ENCODE measurements at regions of chr4 and their contacts with region 1.

Region 1: DNA sequence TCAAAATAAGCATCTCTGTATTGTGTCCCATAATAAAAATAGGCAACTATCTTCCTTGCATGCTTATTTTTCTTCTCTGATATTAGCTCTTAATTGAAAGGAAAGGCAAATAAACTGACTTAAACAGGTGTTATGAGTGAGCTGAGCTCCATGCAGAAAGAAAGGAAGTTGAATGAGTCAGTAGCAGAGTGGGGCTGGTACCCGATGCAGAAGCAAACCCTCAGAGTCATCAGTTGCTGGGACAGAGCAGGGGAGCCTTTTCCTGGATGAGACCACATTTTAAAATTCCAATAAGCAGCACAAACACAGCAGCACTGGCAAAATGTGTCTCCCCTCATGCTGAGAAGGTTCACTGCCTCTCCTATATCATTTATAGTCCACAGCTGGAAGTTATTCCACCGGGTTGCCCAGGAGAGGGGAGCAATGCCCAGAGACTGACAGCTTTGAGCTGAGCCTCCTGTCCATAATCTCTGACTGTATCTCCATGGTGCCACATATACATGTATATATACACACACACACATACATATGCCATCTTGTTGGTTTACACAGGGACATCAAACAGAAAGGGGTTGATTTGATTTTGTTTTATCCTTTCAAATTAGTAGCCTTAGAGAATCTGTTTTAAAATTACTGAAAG is 274.3 kb upstream of the PPARGC1A start:
- DNase-seq: no peak
- H3K4me3 Mint-ChIP-seq: no peak overlapping the region
- H3K27ac Mint-ChIP-seq: no peak overlapping the region
- H3K4me1 Mint-ChIP-seq: no peaks in the 10 kb centered on the region
- H3K27me3 Mint-ChIP-seq: peaks cover 11% of the 10 kb centered on the region

Region 2: GRCh38 chr4:24226023-24226422 is 61.8 kb after region 1 on chr4:
- CTCF ChIA-PET with region 1: no interaction called
- intact Hi-C with region 1: loop called (anchors 10 kb)
- DNase-seq: no peak
- H3K4me3 Mint-ChIP-seq: no peak overlapping the region
- H3K27ac Mint-ChIP-seq: no peak overlapping the region
- H3K4me1 Mint-ChIP-seq: no peaks in the 10 kb centered on the region
- H3K27me3 Mint-ChIP-seq: peaks cover 2% of the 10 kb centered on the region

Region 3: GRCh38 chr4:24382381-24382780 is 218.2 kb after region 1 on chr4:
- CTCF ChIA-PET with region 1: no interaction called
- intact Hi-C with region 1: no loop called
- DNase-seq: no peak
- H3K4me3 Mint-ChIP-seq: no peak overlapping the region
- H3K27ac Mint-ChIP-seq: no peak overlapping the region
- H3K4me1 Mint-ChIP-seq: peaks cover 7% of the 10 kb centered on the region
- H3K27me3 Mint-ChIP-seq: peaks cover 22% of the 10 kb centered on the region

Measured in activated naive CD4-positive, alpha-beta T cell treated with anti-CD3 and anti-CD28 coated beads for 36 hours (primary cell).